ENCODE measurements at regions of chr12 and their contacts with region 1.

Region 1: DNA sequence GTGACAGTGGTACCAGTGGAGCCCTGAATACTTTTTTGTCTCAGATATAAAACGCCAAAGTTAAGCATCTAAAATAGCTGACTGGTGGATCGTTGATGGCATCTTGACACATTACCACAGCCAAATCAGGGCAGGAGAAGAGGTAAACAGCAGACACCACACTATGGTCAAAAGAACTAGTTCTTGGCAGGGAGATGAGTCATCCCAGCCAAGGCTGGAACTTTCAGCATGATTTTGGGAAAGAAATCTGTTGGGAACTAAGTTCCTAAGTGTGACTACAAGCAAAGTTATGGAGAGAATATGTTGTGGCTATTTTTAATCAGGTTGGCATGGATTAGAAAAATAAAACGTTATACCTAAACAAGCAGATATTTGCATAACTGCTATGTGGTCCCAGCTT is 36.9 kb downstream of the LGR5 start:
- DNase-seq: peak in 1 of 2 donors; percentile 84
- H3K4me3 ChIP-seq: no peak overlapping the region
- H3K27ac ChIP-seq: peak overlapping the region; percentile 67 to 77
- H3K4me1 ChIP-seq: peaks cover 0 to 18% of the 10 kb centered on the region in 2 donors
- H3K27me3 ChIP-seq: no peaks in the 10 kb centered on the region
- CTCF ChIP-seq: no peak

Region 2: GRCh38 chr12:70994217-70994788 is 482.2 kb before region 1 on chr12:
- intact Hi-C with region 1: loop called (anchors 2 kb)
- DNase-seq: no peak
- H3K4me3 ChIP-seq: no peak overlapping the region
- H3K27ac ChIP-seq: peak overlapping the region; percentile 59 to 84
- H3K4me1 ChIP-seq: peaks cover 6% of the 10 kb centered on the region in 2 donors
- H3K27me3 ChIP-seq: no peaks in the 10 kb centered on the region
- CTCF ChIP-seq: no peak

Region 3: DNA sequence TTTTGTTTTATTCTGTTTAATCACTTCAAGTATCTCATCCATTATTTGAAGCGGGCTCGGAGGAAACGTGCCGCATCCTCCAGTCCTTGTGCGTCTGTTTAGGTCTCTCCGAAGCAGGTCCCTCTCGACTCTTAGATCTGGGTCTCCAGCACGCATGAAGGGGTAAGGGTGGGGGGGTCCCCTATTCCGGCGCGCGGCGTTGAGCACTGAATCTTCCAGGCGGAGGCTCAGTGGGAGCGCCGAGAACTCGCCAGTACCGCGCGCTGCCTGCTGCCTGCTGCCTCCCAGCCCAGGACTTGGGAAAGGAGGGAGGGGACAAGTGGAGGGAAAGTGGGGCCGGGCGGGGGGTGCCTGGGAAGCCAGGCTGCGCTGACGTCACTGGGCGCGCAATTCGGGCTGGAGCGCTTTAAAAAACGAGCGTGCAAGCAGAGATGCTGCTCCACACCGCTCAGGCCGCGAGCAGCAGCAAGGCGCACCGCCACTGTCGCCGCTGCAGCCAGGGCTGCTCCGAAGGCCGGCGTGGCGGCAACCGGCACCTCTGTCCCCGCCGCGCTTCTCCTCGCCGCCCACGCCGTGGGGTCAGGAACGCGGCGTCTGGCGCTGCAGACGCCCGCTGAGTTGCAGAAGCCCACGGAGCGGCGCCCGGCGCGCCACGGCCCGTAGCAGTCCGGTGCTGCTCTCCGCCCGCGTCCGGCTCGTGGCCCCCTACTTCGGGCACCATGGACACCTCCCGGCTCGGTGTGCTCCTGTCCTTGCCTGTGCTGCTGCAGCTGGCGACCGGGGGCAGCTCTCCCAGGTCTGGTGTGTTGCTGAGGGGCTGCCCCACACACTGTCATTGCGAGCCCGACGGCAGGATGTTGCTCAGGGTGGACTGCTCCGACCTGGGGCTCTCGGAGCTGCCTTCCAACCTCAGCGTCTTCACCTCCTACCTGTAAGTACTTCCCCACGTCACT is 36.9 kb before region 1 on chr12 and contains the start of gene LGR5:
- intact Hi-C with region 1: loop called (anchors 5 kb)
- DNase-seq: peak in 1 of 2 donors; percentile 70
- H3K4me3 ChIP-seq: peak within 1 kb of the TSS; percentile 59 to 87
- H3K27ac ChIP-seq: peak within 1 kb of the TSS in 1 of 2 donors; percentile 62
- H3K4me1 ChIP-seq: no peaks in the 10 kb centered on the region
- H3K27me3 ChIP-seq: no peaks in the 10 kb centered on the region
- CTCF ChIP-seq: no peak
- total RNA-seq, gene LGR5: 1.5 TPM

Measured in ascending aorta (tissue), 2 donors.